CD14-positive monocyte (primary cell): ENCODE measurements at regions of chr15 and their contacts with region 1.

Region 1: GRCh38 chr15:20361091-20361490 is 180.5 kb downstream of the GOLGA6L6 start:
- DNase-seq: no peak
- H3K4me3 ChIP-seq: no peak overlapping the region
- H3K4me3 Mint-ChIP-seq: no peak overlapping the region
- H3K27ac ChIP-seq: no peak overlapping the region
- H3K27ac Mint-ChIP-seq: no peak overlapping the region
- H3K4me1 ChIP-seq: no peaks in the 10 kb centered on the region
- H3K4me1 Mint-ChIP-seq: peaks cover 2% of the 10 kb centered on the region
- H3K27me3 ChIP-seq: no peaks in the 10 kb centered on the region
- H3K27me3 Mint-ChIP-seq: no peaks in the 10 kb centered on the region
- CTCF ChIP-seq: no peak

Region 2: DNA sequence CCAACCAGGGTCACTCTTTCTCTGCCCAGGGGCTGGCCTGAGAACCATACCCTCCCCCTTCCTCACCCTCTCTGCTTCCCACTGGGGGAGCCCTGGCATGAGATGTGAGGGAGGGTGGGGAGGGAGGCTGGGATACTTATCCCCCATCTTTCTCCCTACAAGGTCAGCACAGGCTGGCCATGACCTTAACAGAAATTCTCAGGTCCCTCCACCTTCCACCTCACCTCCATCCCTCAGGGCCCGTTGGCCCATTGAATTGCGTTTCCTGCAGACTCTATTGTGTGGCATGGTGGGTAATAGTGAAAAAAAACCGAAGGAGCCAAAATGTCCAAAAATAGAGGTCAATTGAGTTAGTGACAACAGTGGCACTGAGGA is 1878.7 kb after region 1 on chr15:
- intact Hi-C with region 1: loop called in 1 of 2 experiments (anchors 10 kb)
- DNase-seq: no peak
- H3K4me3 ChIP-seq: no peak overlapping the region
- H3K4me3 Mint-ChIP-seq: peak overlapping the region in 1 of 2 donors; percentile 36
- H3K27ac ChIP-seq: no peak overlapping the region
- H3K27ac Mint-ChIP-seq: no peak overlapping the region
- H3K4me1 ChIP-seq: peaks cover 6 to 13% of the 10 kb centered on the region in 2 donors
- H3K4me1 Mint-ChIP-seq: peaks cover 7% of the 10 kb centered on the region
- H3K27me3 ChIP-seq: no peaks in the 10 kb centered on the region
- H3K27me3 Mint-ChIP-seq: peaks cover 3 to 4% (median 3%) of the 10 kb centered on the region in 3 donors
- CTCF ChIP-seq: no peak